IMR-90 (cell line): ENCODE measurements at regions of chr2 and their contacts with region 1.

Region 1: GRCh38 chr2:217785544-217786045 is 217.2 kb downstream of the TNS1 start:
- DNase-seq: peak; percentile 60
- ATAC-seq: peak; percentile 92
- H3K4me3 ChIP-seq: no peak overlapping the region
- H3K27ac ChIP-seq: no peak overlapping the region
- H3K4me1 ChIP-seq: peaks cover 3% of the 10 kb centered on the region
- H3K27me3 ChIP-seq: no peaks in the 10 kb centered on the region
- CTCF ChIP-seq: peak; percentile 98
- POLR2A ChIP-seq: 0 out of 2 replicates have a peak, but pooled peaks have one; percentile 32
- RAD21 ChIP-seq: peak; percentile 95

Region 2: DNA sequence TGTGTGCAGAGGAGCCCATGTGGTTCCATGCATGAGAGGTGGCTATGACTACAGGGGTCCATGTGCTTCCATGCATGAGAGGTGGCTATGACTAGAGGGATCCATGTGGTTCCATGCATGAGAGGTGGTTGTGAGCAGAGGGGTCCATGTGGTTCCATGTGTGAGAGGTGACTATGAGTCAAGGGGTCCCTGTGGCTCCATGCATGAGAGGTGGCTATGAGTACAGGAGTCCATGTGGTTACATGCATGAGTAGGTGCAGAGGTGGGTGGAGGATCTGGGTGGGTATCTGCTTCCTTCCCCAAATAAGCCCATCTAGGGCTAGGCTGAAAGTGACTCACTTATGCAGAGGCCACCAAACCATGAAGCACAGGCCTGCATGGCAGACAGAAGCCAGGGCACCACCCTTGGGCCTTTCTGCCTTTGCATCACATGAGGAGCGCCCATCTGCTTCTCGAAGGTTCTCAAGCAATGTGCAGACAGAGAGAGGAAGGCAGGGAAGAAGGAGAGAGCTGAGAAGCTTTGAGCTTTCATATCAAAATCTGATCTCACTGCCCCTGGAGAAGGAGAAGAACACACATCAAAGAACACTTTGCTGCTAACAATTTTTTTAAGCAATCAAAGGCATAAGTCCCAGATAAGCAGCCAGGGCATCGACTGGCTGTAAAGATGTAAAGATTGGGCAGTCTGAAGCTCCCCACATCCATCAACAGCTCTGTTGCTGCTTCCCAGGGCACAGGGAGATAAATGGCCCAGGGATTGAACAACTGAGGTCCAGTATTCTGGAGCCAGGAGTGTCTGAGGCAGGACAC is 79.6 kb after region 1 on chr2:
- CTCF ChIA-PET with region 1: no interaction called
- POLR2A ChIA-PET with region 1: no interaction called
- dilution Hi-C with region 1: no loop called
- in situ Hi-C with region 1: no loop called
- intact Hi-C with region 1: loop called (anchors 5 kb)
- DNase-seq: no peak
- ATAC-seq: no peak
- H3K4me3 ChIP-seq: no peak overlapping the region
- H3K27ac ChIP-seq: no peak overlapping the region
- H3K4me1 ChIP-seq: peaks cover 9% of the 10 kb centered on the region
- H3K27me3 ChIP-seq: no peaks in the 10 kb centered on the region
- CTCF ChIP-seq: no peak
- POLR2A ChIP-seq: no peak
- RAD21 ChIP-seq: no peak

Region 3: GRCh38 chr2:217988014-217988839 is 202.6 kb after region 1 on chr2:
- CTCF ChIA-PET with region 1: interaction called, 6 read pairs
- POLR2A ChIA-PET with region 1: no interaction called
- dilution Hi-C with region 1: no loop called
- in situ Hi-C with region 1: no loop called
- intact Hi-C with region 1: loop called (anchors 1 kb)
- DNase-seq: peak; percentile 68
- ATAC-seq: peak; percentile 90
- H3K4me3 ChIP-seq: no peak overlapping the region
- H3K27ac ChIP-seq: no peak overlapping the region
- H3K4me1 ChIP-seq: peaks cover 16% of the 10 kb centered on the region
- H3K27me3 ChIP-seq: no peaks in the 10 kb centered on the region
- CTCF ChIP-seq: peak; percentile 94
- POLR2A ChIP-seq: peak; percentile 27; the same call in 1 of the 2 replicates
- RAD21 ChIP-seq: peak; percentile 99

Region 4: GRCh38 chr2:218041302-218042165 is 255.9 kb after region 1 on chr2:
- CTCF ChIA-PET with region 1: interaction called, 10 read pairs
- POLR2A ChIA-PET with region 1: no interaction called
- dilution Hi-C with region 1: no loop called
- in situ Hi-C with region 1: loop called (anchors 10 kb)
- intact Hi-C with region 1: no loop called
- DNase-seq: no peak
- ATAC-seq: no peak
- H3K4me3 ChIP-seq: no peak overlapping the region
- H3K27ac ChIP-seq: no peak overlapping the region
- H3K4me1 ChIP-seq: no peaks in the 10 kb centered on the region
- H3K27me3 ChIP-seq: peaks cover 49% of the 10 kb centered on the region
- CTCF ChIP-seq: no peak
- POLR2A ChIP-seq: no peak
- RAD21 ChIP-seq: no peak

Region 5: DNA sequence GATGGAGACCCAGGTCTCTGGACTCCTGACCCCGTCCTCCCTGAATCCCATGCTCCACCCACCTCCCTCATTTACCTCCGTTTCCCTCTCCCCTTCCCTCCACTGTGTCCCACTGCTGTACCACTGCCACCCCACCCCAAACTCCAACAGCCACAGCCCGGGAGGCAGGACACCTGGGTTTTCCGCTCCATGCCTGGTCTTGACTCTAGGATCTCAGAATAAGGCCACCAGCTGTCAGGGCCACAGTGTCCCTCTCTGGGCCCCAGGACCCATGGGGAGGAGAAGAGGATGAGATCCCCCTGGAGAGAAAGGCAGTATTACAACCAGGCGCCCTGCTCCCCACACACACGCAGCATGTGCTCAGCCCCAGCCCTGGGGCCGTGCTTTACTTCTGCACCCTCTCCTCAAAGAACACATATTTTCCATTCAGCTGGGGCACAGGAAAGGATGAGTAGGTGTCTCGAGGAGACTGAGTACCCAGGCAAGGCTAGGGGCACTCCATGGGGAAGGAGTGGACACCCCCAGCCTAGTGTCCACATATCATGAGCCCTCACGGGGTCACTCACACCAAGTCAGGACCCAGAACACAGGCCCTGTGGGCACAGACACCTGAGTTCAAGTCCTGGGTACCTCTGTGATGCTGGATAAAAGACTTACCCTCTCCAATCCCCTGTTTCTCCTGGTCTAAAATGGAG is 284.2 kb after region 1 on chr2:
- CTCF ChIA-PET with region 1: interaction called, 10 read pairs
- POLR2A ChIA-PET with region 1: no interaction called
- dilution Hi-C with region 1: no loop called
- in situ Hi-C with region 1: loop called (anchors 5 kb)
- intact Hi-C with region 1: loop called (anchors 1 kb)
- DNase-seq: no peak
- ATAC-seq: no peak
- H3K4me3 ChIP-seq: no peak overlapping the region
- H3K27ac ChIP-seq: no peak overlapping the region
- H3K4me1 ChIP-seq: no peaks in the 10 kb centered on the region
- H3K27me3 ChIP-seq: peaks cover 71% of the 10 kb centered on the region
- CTCF ChIP-seq: no peak
- POLR2A ChIP-seq: no peak
- RAD21 ChIP-seq: no peak

Region 6: DNA sequence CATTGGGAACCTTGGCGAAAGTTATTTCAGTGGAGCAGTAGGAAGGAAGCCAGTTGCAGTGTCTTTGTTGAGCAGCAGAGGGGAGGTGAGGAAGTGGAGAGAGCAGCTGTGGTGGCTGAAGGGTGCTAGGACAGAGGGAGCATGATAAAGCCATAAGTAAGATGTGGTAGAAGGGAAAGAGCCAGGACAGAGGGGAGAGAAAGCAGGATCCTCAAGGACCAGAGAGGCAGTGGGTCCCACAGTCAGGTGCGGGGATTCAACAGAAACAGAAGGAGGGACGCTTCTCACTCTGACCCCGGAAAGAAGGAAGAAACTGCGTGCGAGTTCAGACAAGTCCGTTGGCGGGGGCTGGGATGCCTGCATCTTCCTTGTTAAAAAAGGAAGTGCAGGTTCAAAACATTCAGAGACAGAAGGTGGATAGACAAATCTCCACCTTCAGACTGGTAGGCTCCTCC is 340.1 kb after region 1 on chr2 and contains the start of gene CXCR2:
- CTCF ChIA-PET with region 1: no interaction called
- POLR2A ChIA-PET with region 1: no interaction called
- dilution Hi-C with region 1: no loop called
- in situ Hi-C with region 1: no loop called
- intact Hi-C with region 1: no loop called
- DNase-seq: no peak
- ATAC-seq: peak; percentile 44
- H3K4me3 ChIP-seq: no peak within 1 kb of the TSS
- H3K27ac ChIP-seq: no peak within 1 kb of the TSS
- H3K4me1 ChIP-seq: no peaks in the 10 kb centered on the region
- H3K27me3 ChIP-seq: peaks cover 54% of the 10 kb centered on the region
- CTCF ChIP-seq: no peak
- POLR2A ChIP-seq: no peak
- RAD21 ChIP-seq: no peak
- total RNA-seq, gene CXCR2: not detected in 2 replicates